Endothelial cell of umbilical vein (primary cell): ENCODE measurements at regions of chr13 and their contacts with region 1.

Region 1: DNA sequence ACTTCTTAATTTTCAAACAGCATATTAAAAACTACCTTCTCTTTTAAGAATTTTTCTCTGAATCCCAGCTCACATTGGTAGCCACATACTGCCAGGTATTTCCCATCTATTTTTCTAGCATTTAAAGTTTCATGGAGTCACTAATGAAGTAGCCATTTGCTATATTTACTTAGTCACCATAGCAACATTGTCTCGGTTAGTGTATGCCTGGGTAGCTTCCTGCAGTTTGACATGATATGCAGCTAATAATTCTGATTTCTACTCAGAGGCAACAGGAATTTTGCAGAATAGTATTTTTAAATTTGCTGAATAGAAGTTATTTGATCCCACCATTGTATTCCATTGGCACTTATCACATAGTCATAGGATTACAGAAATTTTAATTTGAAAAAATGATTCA is 30.9 kb upstream of the KCTD4 start:
- DNase-seq: peak; percentile 29
- H3K4me3 ChIP-seq: no peak overlapping the region
- H3K27ac ChIP-seq: no peak overlapping the region
- H3K4me1 ChIP-seq: no peaks in the 10 kb centered on the region
- H3K27me3 ChIP-seq: no peaks in the 10 kb centered on the region
- CTCF ChIP-seq: no peak
- POLR2A ChIP-seq: no peak

Region 2: GRCh38 chr13:45242070-45242469 is 10.3 kb after region 1 on chr13:
- CTCF ChIA-PET with region 1: interaction called, 14 read pairs
- POLR2A ChIA-PET with region 1: no interaction called
- dilution Hi-C with region 1: no loop called
- intact Hi-C with region 1: no loop called
- DNase-seq: peak; percentile 71
- H3K4me3 ChIP-seq: no peak overlapping the region
- H3K27ac ChIP-seq: no peak overlapping the region
- H3K4me1 ChIP-seq: no peaks in the 10 kb centered on the region
- H3K27me3 ChIP-seq: no peaks in the 10 kb centered on the region
- CTCF ChIP-seq: no peak
- POLR2A ChIP-seq: no peak

Region 3: GRCh38 chr13:45718063-45718462 is 486.3 kb after region 1 on chr13:
- CTCF ChIA-PET with region 1: no interaction called
- POLR2A ChIA-PET with region 1: no interaction called
- dilution Hi-C with region 1: no loop called
- intact Hi-C with region 1: no loop called
- DNase-seq: no peak
- H3K4me3 ChIP-seq: no peak overlapping the region
- H3K27ac ChIP-seq: no peak overlapping the region
- H3K4me1 ChIP-seq: peaks cover 14% of the 10 kb centered on the region
- H3K27me3 ChIP-seq: peaks cover under 1 to 3% of the 10 kb centered on the region in 2 experiments
- CTCF ChIP-seq: peak; percentile 6 to 28
- POLR2A ChIP-seq: no peak